H1 (cell line): ENCODE measurements at regions of chr3 and their contacts with region 1.

Region 1: GRCh38 chr3:32018757-32019564 is 37.4 kb downstream of the ZNF860 start:
- DNase-seq: no peak
- H3K4me3 ChIP-seq: no peak overlapping the region
- H3K27ac ChIP-seq: no peak overlapping the region
- H3K4me1 ChIP-seq: no peaks in the 10 kb centered on the region
- H3K27me3 ChIP-seq: no peaks in the 10 kb centered on the region
- CTCF ChIP-seq: peak in 2 of 3 experiments; percentile 49 to 61; a peak in 2 of 4 replicates
- EP300 ChIP-seq: no peak
- POLR2A ChIP-seq: no peak
- RAD21 ChIP-seq: peak; percentile 75 to 80

Region 2: GRCh38 chr3:31952205-31952604 is 66.8 kb before region 1 on chr3:
- CTCF ChIA-PET with region 1: no interaction called
- POLR2A ChIA-PET with region 1: no interaction called
- DNase-seq: no peak
- H3K4me3 ChIP-seq: no peak overlapping the region
- H3K27ac ChIP-seq: 0 out of 2 replicates have a peak overlapping the region, but pooled peaks have one; percentile 23
- H3K4me1 ChIP-seq: peaks cover 0 to 13% (median 5%) of the 10 kb centered on the region in 4 experiments; a peak in 4 of 7 replicates
- H3K27me3 ChIP-seq: no peaks in the 10 kb centered on the region
- CTCF ChIP-seq: no peak
- EP300 ChIP-seq: no peak
- POLR2A ChIP-seq: no peak
- RAD21 ChIP-seq: no peak

Region 3: GRCh38 chr3:32004113-32004765 is 14.7 kb before region 1 on chr3:
- CTCF ChIA-PET with region 1: interaction called, 19 read pairs
- POLR2A ChIA-PET with region 1: no interaction called
- DNase-seq: no peak
- H3K4me3 ChIP-seq: no peak overlapping the region
- H3K27ac ChIP-seq: no peak overlapping the region
- H3K4me1 ChIP-seq: peaks cover 2 to 14% (median 5%) of the 10 kb centered on the region in 4 experiments; a peak in 5 of 7 replicates
- H3K27me3 ChIP-seq: no peaks in the 10 kb centered on the region
- CTCF ChIP-seq: no peak
- EP300 ChIP-seq: no peak
- POLR2A ChIP-seq: no peak
- RAD21 ChIP-seq: no peak; a peak in 1 of 4 replicates

Region 4: DNA sequence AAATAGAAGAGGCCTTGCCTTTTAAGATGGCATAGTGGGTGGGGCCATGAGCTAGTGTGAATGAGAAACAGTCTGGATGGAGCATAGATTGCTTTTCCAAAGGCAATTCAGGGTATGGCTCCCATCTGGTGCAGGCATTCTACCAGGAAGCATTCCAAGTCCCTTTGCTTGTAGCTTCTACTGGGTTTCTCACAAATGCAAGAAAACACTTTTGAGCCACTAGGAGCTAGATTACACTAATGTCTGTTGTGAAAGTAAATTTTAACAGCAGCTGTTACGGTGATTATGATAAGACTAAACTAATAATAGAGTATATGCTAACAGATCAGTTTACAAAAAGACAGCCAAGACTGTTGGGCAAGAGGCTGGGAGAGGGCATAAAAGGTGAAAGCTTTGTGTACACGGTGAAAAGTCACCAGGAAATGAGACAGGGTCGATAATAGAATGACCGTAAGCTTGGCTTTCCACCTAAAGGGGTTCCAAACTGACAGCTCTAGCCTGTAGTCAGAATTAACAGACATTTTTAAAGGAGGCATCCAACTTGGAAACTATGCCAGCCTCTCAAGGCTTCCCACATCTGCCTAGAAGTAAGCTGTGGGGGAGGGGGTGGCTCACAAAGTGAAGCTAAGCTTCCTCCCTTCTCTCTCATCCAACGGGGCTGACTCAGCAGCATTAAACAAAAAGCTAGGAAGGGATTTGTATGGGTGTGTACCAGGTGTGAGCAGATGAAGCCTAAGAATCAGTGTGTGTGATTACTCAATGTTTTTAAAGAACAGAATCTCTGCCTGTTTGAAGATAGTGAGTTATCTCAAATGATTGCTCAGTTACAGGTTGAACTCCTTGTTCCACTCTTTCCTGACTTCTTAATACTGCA is 26.4 kb after region 1 on chr3:
- CTCF ChIA-PET with region 1: interaction called, 15 read pairs
- POLR2A ChIA-PET with region 1: no interaction called
- DNase-seq: no peak
- H3K4me3 ChIP-seq: no peak overlapping the region
- H3K27ac ChIP-seq: no peak overlapping the region
- H3K4me1 ChIP-seq: peaks cover 0 to 10% (median under 1%) of the 10 kb centered on the region in 4 experiments; a peak in 2 of 7 replicates
- H3K27me3 ChIP-seq: no peaks in the 10 kb centered on the region
- CTCF ChIP-seq: no peak
- EP300 ChIP-seq: no peak
- POLR2A ChIP-seq: no peak
- RAD21 ChIP-seq: no peak

Region 5: GRCh38 chr3:32120471-32120870 is 101.5 kb after region 1 on chr3:
- CTCF ChIA-PET with region 1: interaction called, 10 read pairs
- POLR2A ChIA-PET with region 1: no interaction called
- DNase-seq: no peak
- H3K4me3 ChIP-seq: no peak overlapping the region
- H3K27ac ChIP-seq: no peak overlapping the region
- H3K4me1 ChIP-seq: 0 out of 7 replicates have a peak, but pooled peaks cover 0 to 2% (median 0%) of the 10 kb centered on the region in 4 experiments
- H3K27me3 ChIP-seq: no peaks in the 10 kb centered on the region
- CTCF ChIP-seq: no peak
- EP300 ChIP-seq: no peak
- POLR2A ChIP-seq: no peak
- RAD21 ChIP-seq: no peak

Region 6: DNA sequence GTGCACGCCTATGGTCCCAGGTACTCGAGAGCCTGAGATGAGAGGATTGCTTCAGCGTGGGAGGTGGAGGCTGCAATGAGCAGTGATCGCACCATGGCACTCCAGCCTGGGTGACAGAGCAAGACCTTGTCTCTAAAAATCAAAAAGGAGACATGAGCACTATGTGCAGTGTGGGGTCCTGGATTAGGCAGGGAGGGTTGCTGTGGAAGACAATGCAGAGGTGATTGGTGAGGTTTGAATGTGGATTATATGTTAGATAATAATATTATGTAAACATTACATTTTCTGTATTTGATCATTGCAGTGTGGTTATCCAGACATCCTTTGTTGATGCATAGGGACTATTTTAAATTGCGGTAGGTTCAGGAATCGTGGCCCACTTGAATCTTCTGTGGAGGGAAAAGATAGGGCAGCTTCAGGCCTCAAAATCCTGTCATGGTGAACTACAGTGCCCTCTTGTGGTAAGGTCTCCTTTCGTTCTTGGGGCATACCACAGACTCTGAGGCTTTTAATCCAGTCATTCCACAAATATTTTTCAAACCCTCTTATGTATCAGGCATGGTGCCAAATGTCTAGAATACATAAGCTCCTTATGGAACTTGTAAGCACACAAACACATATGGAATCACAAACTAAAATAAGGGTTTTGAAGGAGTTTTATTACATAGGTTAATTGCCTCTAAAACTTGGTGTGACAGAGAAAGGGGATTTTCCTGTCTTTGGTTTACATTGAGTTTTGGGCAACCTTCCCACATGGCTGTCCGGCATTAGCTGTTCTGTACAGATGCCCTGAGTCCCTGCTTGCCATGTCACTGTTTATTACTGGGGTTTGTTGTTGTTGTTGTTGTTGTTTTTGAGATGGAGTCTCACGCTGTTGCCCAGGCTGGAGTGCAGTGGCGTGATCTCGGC is 125.1 kb after region 1 on chr3:
- CTCF ChIA-PET with region 1: interaction called, 14 read pairs
- POLR2A ChIA-PET with region 1: no interaction called
- DNase-seq: no peak
- H3K4me3 ChIP-seq: no peak overlapping the region
- H3K27ac ChIP-seq: no peak overlapping the region
- H3K4me1 ChIP-seq: peaks cover 0 to 6% (median 4%) of the 10 kb centered on the region in 4 experiments; a peak in 4 of 7 replicates
- H3K27me3 ChIP-seq: no peaks in the 10 kb centered on the region
- CTCF ChIP-seq: peak; percentile 26 to 81 (median 77)
- EP300 ChIP-seq: no peak
- POLR2A ChIP-seq: no peak
- RAD21 ChIP-seq: peak; percentile 89 to 91